A673 (cell line): ENCODE measurements at regions of chr9 and their contacts with region 1.

Region 1: GRCh38 chr9:385818-386398 is 171.2 kb downstream of the DOCK8 start:
- DNase-seq: peak; percentile 66
- H3K4me3 ChIP-seq: no peak overlapping the region
- H3K27ac ChIP-seq: no peak overlapping the region
- H3K4me1 ChIP-seq: no peaks in the 10 kb centered on the region
- H3K27me3 ChIP-seq: peaks cover 50% of the 10 kb centered on the region
- CTCF ChIP-seq: peak; percentile 78

Region 2: DNA sequence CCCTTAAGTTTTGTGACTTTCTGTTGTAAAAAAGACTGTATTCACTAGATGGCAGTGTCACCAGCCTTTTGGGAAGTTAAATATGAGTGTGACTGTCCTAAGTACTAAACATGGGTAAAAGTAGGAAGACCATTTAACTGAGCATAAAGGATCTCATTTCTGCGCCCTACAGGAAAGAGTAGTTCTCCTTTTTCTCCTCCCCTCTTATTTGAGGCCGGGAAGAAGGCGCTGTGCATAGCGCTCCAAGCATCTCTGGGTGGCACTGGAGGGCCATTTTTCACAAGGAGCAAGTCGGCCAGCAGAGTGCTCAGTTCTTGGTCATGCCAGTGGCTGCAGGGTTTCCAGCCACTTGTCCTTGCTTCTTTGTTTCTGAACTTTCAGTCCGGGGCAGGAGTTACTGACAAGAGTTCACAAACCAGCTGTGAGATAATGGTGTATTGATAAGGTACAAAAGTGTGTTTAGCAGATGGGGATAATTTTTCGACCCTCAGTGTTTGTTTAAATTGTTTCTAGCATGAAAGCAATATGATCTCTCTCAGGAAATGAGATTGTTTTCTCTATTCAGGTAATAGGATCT is 228.0 kb after region 1 on chr9:
- CTCF ChIA-PET with region 1: no interaction called
- POLR2A ChIA-PET with region 1: no interaction called
- intact Hi-C with region 1: loop called (anchors 5 kb)
- DNase-seq: peak; percentile 81
- H3K4me3 ChIP-seq: no peak overlapping the region
- H3K27ac ChIP-seq: no peak overlapping the region
- H3K4me1 ChIP-seq: no peaks in the 10 kb centered on the region
- H3K27me3 ChIP-seq: peaks cover 4% of the 10 kb centered on the region
- CTCF ChIP-seq: peak; percentile 78

Region 3: GRCh38 chr9:763692-764524 is 378.0 kb after region 1 on chr9:
- CTCF ChIA-PET with region 1: no interaction called
- POLR2A ChIA-PET with region 1: no interaction called
- intact Hi-C with region 1: loop called (anchors 5 kb)
- DNase-seq: peak; percentile 73
- H3K4me3 ChIP-seq: no peak overlapping the region
- H3K27ac ChIP-seq: no peak overlapping the region
- H3K4me1 ChIP-seq: no peaks in the 10 kb centered on the region
- H3K27me3 ChIP-seq: peaks cover 23% of the 10 kb centered on the region
- CTCF ChIP-seq: peak; percentile 69

Region 4: GRCh38 chr9:806285-807156 is 420.6 kb after region 1 on chr9:
- CTCF ChIA-PET with region 1: no interaction called
- POLR2A ChIA-PET with region 1: no interaction called
- intact Hi-C with region 1: loop called (anchors 2 kb)
- DNase-seq: peak; percentile 45
- H3K4me3 ChIP-seq: no peak overlapping the region
- H3K27ac ChIP-seq: no peak overlapping the region
- H3K4me1 ChIP-seq: peaks cover 3% of the 10 kb centered on the region
- H3K27me3 ChIP-seq: peaks cover 21% of the 10 kb centered on the region
- CTCF ChIP-seq: peak; percentile 72

Region 5: DNA sequence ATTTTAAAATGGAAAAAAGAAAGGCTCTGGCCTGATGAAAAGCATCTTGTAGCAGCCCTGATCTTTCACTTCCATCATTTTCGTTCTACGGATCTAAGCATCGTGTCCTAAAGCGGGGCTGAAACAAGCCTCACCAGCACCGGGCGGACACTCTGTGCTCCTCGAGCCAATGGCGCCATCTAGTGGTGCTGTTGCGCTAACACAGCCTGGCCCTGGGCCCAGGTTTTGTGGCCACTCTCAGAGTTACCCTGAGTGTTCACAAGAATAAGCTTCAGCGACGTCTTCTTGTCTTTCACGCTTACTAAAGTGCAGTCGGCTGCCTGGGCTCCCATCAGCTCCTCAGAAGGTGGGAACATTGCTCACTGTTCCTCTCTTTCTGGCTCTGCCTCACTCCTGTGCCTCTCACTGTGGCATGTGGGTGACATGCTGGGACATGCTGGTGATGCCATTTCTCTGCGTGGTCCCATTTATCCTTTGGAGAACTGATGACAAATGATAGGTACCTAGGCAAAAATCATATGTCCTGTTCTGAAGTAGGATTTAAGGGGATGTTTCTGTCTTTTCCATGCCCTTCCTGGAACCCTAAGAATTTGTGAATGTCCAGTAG is 623.3 kb after region 1 on chr9:
- CTCF ChIA-PET with region 1: no interaction called
- POLR2A ChIA-PET with region 1: no interaction called
- intact Hi-C with region 1: loop called (anchors 2 kb)
- DNase-seq: peak; percentile 82
- H3K4me3 ChIP-seq: no peak overlapping the region
- H3K27ac ChIP-seq: no peak overlapping the region
- H3K4me1 ChIP-seq: no peaks in the 10 kb centered on the region
- H3K27me3 ChIP-seq: peaks cover 7% of the 10 kb centered on the region
- CTCF ChIP-seq: peak; percentile 92